CD8-positive, alpha-beta T cell (primary cell): ENCODE measurements at regions of chr13 and their contacts with region 1.

Region 1: DNA sequence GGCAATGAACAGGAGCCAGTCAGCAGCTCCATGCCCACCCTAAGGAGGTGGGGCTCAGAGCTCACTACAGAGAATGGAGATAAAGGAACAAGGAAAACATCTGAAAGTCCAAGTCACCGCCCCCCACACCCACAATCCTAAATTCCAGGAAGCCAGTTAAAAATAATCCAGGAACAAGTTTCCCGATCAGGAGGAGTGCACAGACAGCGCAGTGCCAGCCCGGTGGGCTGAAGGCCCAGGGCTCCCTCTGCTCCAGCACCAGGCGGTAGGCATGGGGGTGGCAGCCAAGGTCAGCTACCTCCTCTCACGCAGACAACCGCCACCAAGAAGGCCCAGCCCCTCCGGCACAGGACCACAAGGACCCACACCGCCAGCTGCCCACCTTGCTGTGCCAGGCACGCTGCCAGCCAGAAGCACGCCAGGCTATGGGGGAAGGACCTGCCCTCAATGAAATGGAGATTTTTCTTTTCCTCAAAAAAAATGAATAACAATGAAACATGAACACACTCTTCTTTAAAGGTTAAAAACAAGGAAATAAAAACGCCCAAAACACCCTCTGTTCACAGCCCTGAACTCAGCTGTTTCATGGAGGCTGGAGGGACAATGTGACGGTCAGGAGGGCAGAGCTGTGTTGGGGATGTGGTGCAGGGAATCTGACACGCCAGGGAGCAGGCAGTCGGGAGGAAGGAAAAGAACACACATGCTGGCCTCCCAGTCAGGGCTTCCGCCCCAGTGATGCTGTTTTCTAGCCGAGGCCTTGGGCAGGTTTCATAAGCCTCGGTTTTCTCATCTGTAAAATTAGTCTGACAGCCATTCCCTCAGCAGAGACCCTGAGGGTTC is 11.0 kb downstream of the STK24 start:
- DNase-seq: no peak
- ATAC-seq: no peak
- H3K4me3 ChIP-seq: no peak overlapping the region
- H3K4me3 Mint-ChIP-seq: peak overlapping the region; percentile 73
- H3K27ac ChIP-seq: peak overlapping the region in 1 of 2 experiments; percentile 39
- H3K27ac Mint-ChIP-seq: peak overlapping the region; percentile 97
- H3K4me1 ChIP-seq: peaks cover 79% of the 10 kb centered on the region
- H3K4me1 Mint-ChIP-seq: peaks cover 87% of the 10 kb centered on the region
- H3K27me3 ChIP-seq: no peaks in the 10 kb centered on the region
- H3K27me3 Mint-ChIP-seq: no peaks in the 10 kb centered on the region
- CTCF ChIP-seq: no peak

Region 2: GRCh38 chr13:97257800-97258799 is 1307.8 kb before region 1 on chr13:
- CTCF ChIA-PET with region 1: no interaction called
- POLR2A ChIA-PET with region 1: no interaction called
- intact Hi-C with region 1: no loop called
- DNase-seq: peak in 2 of 9 experiments; percentile 17 to 30
- ATAC-seq: no peak
- H3K4me3 ChIP-seq: no peak overlapping the region
- H3K4me3 Mint-ChIP-seq: no peak overlapping the region
- H3K27ac ChIP-seq: no peak overlapping the region
- H3K27ac Mint-ChIP-seq: no peak overlapping the region
- H3K4me1 ChIP-seq: peaks cover 10% of the 10 kb centered on the region
- H3K4me1 Mint-ChIP-seq: peaks cover 72% of the 10 kb centered on the region
- H3K27me3 ChIP-seq: no peaks in the 10 kb centered on the region
- H3K27me3 Mint-ChIP-seq: no peaks in the 10 kb centered on the region
- CTCF ChIP-seq: no peak

Region 3: DNA sequence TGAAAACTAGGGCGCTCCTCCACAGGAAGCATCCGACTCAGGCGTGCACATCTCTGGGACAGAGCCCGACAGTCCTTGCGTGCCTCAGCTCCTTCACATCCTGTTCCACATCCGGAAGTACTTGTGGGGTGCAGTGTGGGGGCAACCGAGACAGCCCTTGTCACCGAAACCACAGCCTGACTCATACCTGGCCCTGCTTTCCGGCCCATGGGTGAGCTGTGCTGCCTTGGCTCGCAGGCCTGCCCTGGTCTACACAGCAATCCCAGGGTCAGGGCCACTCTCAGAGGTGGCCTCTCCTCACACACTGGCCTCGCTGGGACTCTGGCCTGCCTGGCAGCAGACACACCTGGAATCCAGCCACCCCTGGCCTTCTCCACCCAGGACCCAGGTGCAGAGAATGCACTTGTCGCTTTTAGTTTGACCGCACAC is 89.4 kb before region 1 on chr13:
- CTCF ChIA-PET with region 1: interaction called, 3 read pairs
- POLR2A ChIA-PET with region 1: interaction called, 3 read pairs
- intact Hi-C with region 1: loop called in 1 of 2 experiments (anchors 1 kb)
- DNase-seq: peak; percentile 57 to 95 (median 87)
- ATAC-seq: peak; percentile 90
- H3K4me3 ChIP-seq: peak overlapping the region in 1 of 2 experiments; percentile 20
- H3K4me3 Mint-ChIP-seq: peak overlapping the region; percentile 67
- H3K27ac ChIP-seq: peak overlapping the region; percentile 44 to 58
- H3K27ac Mint-ChIP-seq: peak overlapping the region; percentile 94
- H3K4me1 ChIP-seq: peaks cover 44% of the 10 kb centered on the region
- H3K4me1 Mint-ChIP-seq: peaks cover 66% of the 10 kb centered on the region
- H3K27me3 ChIP-seq: no peaks in the 10 kb centered on the region
- H3K27me3 Mint-ChIP-seq: no peaks in the 10 kb centered on the region
- CTCF ChIP-seq: no peak

Region 4: GRCh38 chr13:98509271-98510155 is 56.4 kb before region 1 on chr13:
- CTCF ChIA-PET with region 1: no interaction called
- POLR2A ChIA-PET with region 1: no interaction called
- intact Hi-C with region 1: loop called in 1 of 2 experiments (anchors 5 kb)
- DNase-seq: peak in 8 of 9 experiments; percentile 9 to 48 (median 34)
- ATAC-seq: peak; percentile 66
- H3K4me3 ChIP-seq: no peak overlapping the region
- H3K4me3 Mint-ChIP-seq: peak overlapping the region; percentile 30
- H3K27ac ChIP-seq: no peak overlapping the region
- H3K27ac Mint-ChIP-seq: peak overlapping the region; percentile 55
- H3K4me1 ChIP-seq: peaks cover 38% of the 10 kb centered on the region
- H3K4me1 Mint-ChIP-seq: peaks cover 81% of the 10 kb centered on the region
- H3K27me3 ChIP-seq: no peaks in the 10 kb centered on the region
- H3K27me3 Mint-ChIP-seq: no peaks in the 10 kb centered on the region
- CTCF ChIP-seq: no peak

Region 5: GRCh38 chr13:98542568-98543377 is 23.2 kb before region 1 on chr13:
- CTCF ChIA-PET with region 1: interaction called, 3 read pairs
- POLR2A ChIA-PET with region 1: interaction called, 4 read pairs
- intact Hi-C with region 1: loop called in 1 of 2 experiments (anchors 2 kb)
- DNase-seq: peak in 2 of 9 experiments; percentile 20 to 41
- ATAC-seq: peak; percentile 64
- H3K4me3 ChIP-seq: peak overlapping the region in 1 of 2 experiments; percentile 38
- H3K4me3 Mint-ChIP-seq: peak overlapping the region; percentile 75
- H3K27ac ChIP-seq: peak overlapping the region in 1 of 2 experiments; percentile 12
- H3K27ac Mint-ChIP-seq: peak overlapping the region; percentile 82
- H3K4me1 ChIP-seq: peaks cover 68% of the 10 kb centered on the region
- H3K4me1 Mint-ChIP-seq: peaks cover 91% of the 10 kb centered on the region
- H3K27me3 ChIP-seq: no peaks in the 10 kb centered on the region
- H3K27me3 Mint-ChIP-seq: no peaks in the 10 kb centered on the region
- CTCF ChIP-seq: no peak

Region 6: GRCh38 chr13:98693756-98694155 is 127.8 kb after region 1 on chr13:
- CTCF ChIA-PET with region 1: no interaction called
- POLR2A ChIA-PET with region 1: no interaction called
- intact Hi-C with region 1: no loop called
- DNase-seq: no peak
- ATAC-seq: no peak
- H3K4me3 ChIP-seq: no peak overlapping the region
- H3K4me3 Mint-ChIP-seq: no peak overlapping the region
- H3K27ac ChIP-seq: no peak overlapping the region
- H3K27ac Mint-ChIP-seq: no peak overlapping the region
- H3K4me1 ChIP-seq: no peaks in the 10 kb centered on the region
- H3K4me1 Mint-ChIP-seq: no peaks in the 10 kb centered on the region
- H3K27me3 ChIP-seq: no peaks in the 10 kb centered on the region
- H3K27me3 Mint-ChIP-seq: peaks cover 9% of the 10 kb centered on the region
- CTCF ChIP-seq: no peak

Region 7: DNA sequence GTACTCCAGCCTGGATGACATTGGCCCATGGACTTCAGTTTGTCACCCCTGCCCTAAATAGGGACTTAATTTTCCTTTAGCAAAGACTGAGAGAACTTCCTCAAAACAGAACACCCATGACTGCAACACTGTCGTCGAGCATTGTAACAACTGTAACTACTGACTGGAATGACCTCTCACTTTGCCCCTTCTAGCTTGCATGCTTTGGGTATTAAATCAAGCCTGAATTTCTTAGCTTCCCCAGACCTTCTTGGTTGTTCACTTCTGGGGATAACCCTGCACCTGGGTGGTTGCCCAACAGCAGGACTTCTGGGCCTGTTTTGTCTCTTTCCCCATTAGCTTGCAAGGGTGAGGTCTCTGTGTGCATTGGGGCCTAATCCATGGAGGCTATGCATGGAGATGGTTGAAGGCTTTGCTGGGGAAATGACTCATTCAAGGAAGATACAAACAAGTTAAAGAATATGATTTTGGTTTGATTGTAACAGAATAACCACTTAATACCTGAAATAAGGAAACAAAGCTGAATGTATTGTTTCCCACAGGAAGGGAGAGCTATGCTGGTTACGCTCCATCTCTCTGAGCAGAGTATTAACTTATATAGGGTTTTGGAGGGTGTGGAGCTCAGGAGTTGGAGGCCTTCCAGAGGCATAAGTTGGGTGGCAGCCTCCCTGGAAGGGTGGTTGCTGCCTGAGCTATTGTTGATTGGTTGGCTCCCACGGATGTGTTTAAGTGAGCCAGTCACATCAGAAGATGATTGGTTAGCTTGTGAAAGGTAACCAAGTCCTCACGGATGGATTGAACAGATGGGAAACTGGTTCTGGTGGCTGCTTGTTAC is 600.0 kb after region 1 on chr13:
- CTCF ChIA-PET with region 1: no interaction called
- POLR2A ChIA-PET with region 1: no interaction called
- intact Hi-C with region 1: no loop called
- DNase-seq: no peak
- ATAC-seq: no peak
- H3K4me3 ChIP-seq: no peak overlapping the region
- H3K4me3 Mint-ChIP-seq: no peak overlapping the region
- H3K27ac ChIP-seq: no peak overlapping the region
- H3K27ac Mint-ChIP-seq: no peak overlapping the region
- H3K4me1 ChIP-seq: no peaks in the 10 kb centered on the region
- H3K4me1 Mint-ChIP-seq: no peaks in the 10 kb centered on the region
- H3K27me3 ChIP-seq: no peaks in the 10 kb centered on the region
- H3K27me3 Mint-ChIP-seq: no peaks in the 10 kb centered on the region
- CTCF ChIP-seq: no peak